GM12878 (cell line): ENCODE measurements at regions of chr12 and their contacts with region 1.

Region 1: DNA sequence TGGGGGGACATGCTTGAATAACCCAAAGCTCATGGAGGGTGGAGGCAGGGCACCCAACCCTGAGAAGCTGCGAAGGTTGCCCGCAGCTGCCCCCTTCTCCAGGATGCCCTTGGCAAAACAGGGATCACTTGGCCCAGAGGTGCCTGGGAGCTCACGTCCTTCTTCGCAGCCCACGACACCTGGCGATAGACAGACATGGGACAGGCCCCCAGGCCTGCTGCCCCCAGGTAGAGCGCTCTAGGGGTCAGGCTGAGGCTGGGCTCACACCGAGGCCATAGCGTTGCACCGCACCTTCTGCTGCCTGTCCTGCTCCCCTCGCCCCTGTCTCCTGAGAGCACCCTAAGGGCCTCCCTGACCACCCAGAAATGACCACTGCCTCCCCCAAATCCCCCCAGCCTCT is 20.2 kb upstream of the PLA2G1B start:
- DNase-seq: no peak
- ATAC-seq: no peak
- H3K4me3 ChIP-seq: no peak overlapping the region
- H3K27ac ChIP-seq: no peak overlapping the region
- H3K4me1 ChIP-seq: no peaks in the 10 kb centered on the region
- H3K27me3 ChIP-seq: no peaks in the 10 kb centered on the region
- CTCF ChIP-seq: no peak
- EP300 ChIP-seq: no peak
- POLR2A ChIP-seq: no peak
- RAD21 ChIP-seq: no peak

Region 2: DNA sequence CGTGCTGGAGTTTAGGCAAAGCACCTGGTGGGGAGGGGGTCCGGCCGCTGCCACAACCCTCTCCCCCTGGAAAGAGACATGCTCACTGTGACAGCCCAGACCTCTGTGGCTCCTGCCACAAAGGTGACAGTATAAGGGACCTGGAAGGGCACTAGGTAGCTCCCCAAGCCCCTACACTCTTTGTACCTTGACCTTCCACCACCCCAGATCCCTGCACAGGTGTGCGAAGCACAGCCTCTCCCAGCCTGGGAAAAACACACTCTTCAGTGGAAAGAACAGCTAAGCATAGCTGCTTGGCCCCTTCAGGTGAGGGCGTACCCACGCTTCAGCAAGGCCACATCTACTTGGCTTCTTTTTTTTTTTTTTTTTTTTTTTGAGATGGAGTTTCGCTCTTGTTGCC is 15.2 kb before region 1 on chr12:
- CTCF ChIA-PET with region 1: no interaction called
- POLR2A ChIA-PET with region 1: no interaction called
- RAD21 ChIA-PET with region 1: no interaction called
- SMC1A ChIA-PET with region 1: no interaction called
- in situ Hi-C with region 1: no loop called
- intact Hi-C with region 1: no loop called
- DNase-seq: no peak
- ATAC-seq: no peak
- H3K4me3 ChIP-seq: no peak overlapping the region
- H3K27ac ChIP-seq: no peak overlapping the region
- H3K4me1 ChIP-seq: no peaks in the 10 kb centered on the region
- H3K27me3 ChIP-seq: no peaks in the 10 kb centered on the region; a peak in 1 of 4 replicates
- CTCF ChIP-seq: no peak
- EP300 ChIP-seq: no peak
- POLR2A ChIP-seq: no peak
- RAD21 ChIP-seq: no peak

Region 3: GRCh38 chr12:120367233-120367923 is 19.6 kb after region 1 on chr12:
- CTCF ChIA-PET with region 1: no interaction called
- POLR2A ChIA-PET with region 1: interaction called, 3 read pairs
- RAD21 ChIA-PET with region 1: no interaction called
- SMC1A ChIA-PET with region 1: no interaction called
- in situ Hi-C with region 1: no loop called
- intact Hi-C with region 1: loop called (anchors 2 kb)
- DNase-seq: no peak
- ATAC-seq: no peak
- H3K4me3 ChIP-seq: no peak overlapping the region
- H3K27ac ChIP-seq: no peak overlapping the region
- H3K4me1 ChIP-seq: no peaks in the 10 kb centered on the region
- H3K27me3 ChIP-seq: peaks cover 11 to 15% of the 10 kb centered on the region in 2 experiments
- CTCF ChIP-seq: peak in 2 of 3 experiments; percentile 26 to 30; a peak in 2 of 6 replicates
- EP300 ChIP-seq: no peak
- POLR2A ChIP-seq: no peak
- RAD21 ChIP-seq: no peak

Region 4: GRCh38 chr12:120399531-120399930 is 51.8 kb after region 1 on chr12:
- CTCF ChIA-PET with region 1: no interaction called
- POLR2A ChIA-PET with region 1: no interaction called
- RAD21 ChIA-PET with region 1: no interaction called
- SMC1A ChIA-PET with region 1: no interaction called
- in situ Hi-C with region 1: no loop called
- intact Hi-C with region 1: no loop called
- DNase-seq: peak; percentile 5
- ATAC-seq: peak; percentile 61
- H3K4me3 ChIP-seq: no peak overlapping the region
- H3K27ac ChIP-seq: no peak overlapping the region
- H3K4me1 ChIP-seq: 0 out of 2 replicates have a peak, but pooled peaks cover 3% of the 10 kb centered on the region
- H3K27me3 ChIP-seq: no peaks in the 10 kb centered on the region; a peak in 2 of 4 replicates
- CTCF ChIP-seq: no peak
- EP300 ChIP-seq: no peak
- POLR2A ChIP-seq: no peak
- RAD21 ChIP-seq: no peak